ENCODE measurements at regions of chr2 and their contacts with region 1.

Region 1: DNA sequence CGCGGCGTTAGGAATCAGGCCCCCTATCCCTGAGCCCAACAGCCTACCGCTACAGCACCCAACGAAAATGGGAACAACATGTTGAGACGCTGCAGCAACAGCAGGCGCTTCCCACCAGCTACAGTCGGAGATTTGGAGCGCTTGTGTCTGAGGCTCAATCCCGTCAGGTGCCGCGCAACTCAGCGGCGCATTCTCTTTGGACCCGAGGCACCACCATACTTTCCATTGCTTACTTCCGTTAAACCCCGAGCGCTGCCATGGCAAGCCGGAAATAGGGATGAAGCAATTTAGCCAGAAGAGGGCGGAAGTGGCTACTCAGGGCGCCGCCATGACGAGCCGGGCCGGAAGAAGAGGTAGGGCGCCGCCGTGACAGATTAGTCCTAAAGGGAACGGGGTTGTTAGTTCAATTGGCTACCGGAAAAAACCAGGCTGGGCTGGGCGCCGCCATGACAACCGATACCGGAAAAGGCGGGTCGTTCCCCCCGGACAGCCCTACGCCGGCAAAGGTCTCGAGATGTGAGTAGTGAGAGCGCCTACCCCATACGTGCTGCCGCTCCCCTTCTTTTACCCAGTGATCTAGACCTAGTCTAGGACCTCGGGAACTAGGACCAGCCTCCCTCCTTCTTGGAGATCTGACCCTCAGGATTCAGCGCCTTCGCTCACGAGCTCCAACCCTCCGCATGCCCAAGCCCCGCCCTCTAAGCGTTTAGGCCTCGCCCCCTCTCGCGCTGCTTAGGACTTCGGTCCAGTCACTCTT is at the start of gene CHCHD5:
- DNase-seq: peak; percentile 84
- H3K4me3 ChIP-seq: peak within 1 kb of the TSS; percentile 70
- H3K27ac ChIP-seq: peak within 1 kb of the TSS; percentile 97
- H3K27me3 ChIP-seq: no peaks in the 10 kb centered on the region
- CTCF ChIP-seq: peak; percentile 12; the same call in 1 of the 2 replicates
- polyA plus RNA-seq, gene CHCHD5: 8.9 and 15.2 TPM in 2 replicates

Region 2: GRCh38 chr2:112572022-112572421 is 12.3 kb before region 1 on chr2:
- CTCF ChIA-PET with region 1: no interaction called
- POLR2A ChIA-PET with region 1: no interaction called
- DNase-seq: no peak
- H3K4me3 ChIP-seq: no peak overlapping the region
- H3K27ac ChIP-seq: no peak overlapping the region
- H3K27me3 ChIP-seq: no peaks in the 10 kb centered on the region
- CTCF ChIP-seq: no peak

Region 3: GRCh38 chr2:112606488-112606902 is 22.2 kb after region 1 on chr2:
- CTCF ChIA-PET with region 1: interaction called, 21 read pairs
- POLR2A ChIA-PET with region 1: interaction called, 5 read pairs
- DNase-seq: no peak
- H3K4me3 ChIP-seq: no peak overlapping the region
- H3K27ac ChIP-seq: peak overlapping the region; percentile 21
- H3K27me3 ChIP-seq: no peaks in the 10 kb centered on the region
- CTCF ChIP-seq: no peak